Mammary epithelial cell (primary cell): ENCODE measurements at regions of chr3 and their contacts with region 1.

Region 1: GRCh38 chr3:193863657-193864357 is 270.8 kb downstream of the OPA1 start:
- DNase-seq: no peak
- H3K4me3 ChIP-seq: no peak overlapping the region
- H3K27ac ChIP-seq: no peak overlapping the region
- H3K4me1 ChIP-seq: peaks cover 39% of the 10 kb centered on the region
- H3K27me3 ChIP-seq: no peaks in the 10 kb centered on the region
- CTCF ChIP-seq: no peak

Region 2: DNA sequence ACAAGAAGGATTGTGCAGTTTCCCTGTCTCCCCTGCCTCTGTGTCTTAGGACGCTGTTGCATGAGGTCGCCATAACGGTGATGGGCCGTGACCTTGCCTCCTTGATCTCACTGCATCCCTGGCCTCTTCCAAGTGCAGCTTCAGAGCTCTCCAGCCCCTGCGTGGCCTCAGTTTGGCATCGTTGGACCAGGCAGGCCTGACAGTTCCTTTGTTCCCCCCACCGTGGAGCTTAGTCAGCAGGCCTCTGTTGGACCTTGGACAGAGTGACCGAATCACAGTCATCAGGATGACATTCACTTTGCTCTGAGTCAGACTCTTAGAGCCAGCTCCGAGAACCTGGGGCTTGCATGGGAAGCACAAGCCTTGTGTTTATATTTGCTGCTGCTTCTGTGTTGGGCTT is 131.4 kb before region 1 on chr3:
- CTCF ChIA-PET with region 1: no interaction called
- dilution Hi-C with region 1: no loop called
- in situ Hi-C with region 1: no loop called
- intact Hi-C with region 1: no loop called
- DNase-seq: peak; percentile 48
- H3K4me3 ChIP-seq: no peak overlapping the region
- H3K27ac ChIP-seq: no peak overlapping the region
- H3K4me1 ChIP-seq: no peaks in the 10 kb centered on the region
- H3K27me3 ChIP-seq: no peaks in the 10 kb centered on the region
- CTCF ChIP-seq: no peak

Region 3: DNA sequence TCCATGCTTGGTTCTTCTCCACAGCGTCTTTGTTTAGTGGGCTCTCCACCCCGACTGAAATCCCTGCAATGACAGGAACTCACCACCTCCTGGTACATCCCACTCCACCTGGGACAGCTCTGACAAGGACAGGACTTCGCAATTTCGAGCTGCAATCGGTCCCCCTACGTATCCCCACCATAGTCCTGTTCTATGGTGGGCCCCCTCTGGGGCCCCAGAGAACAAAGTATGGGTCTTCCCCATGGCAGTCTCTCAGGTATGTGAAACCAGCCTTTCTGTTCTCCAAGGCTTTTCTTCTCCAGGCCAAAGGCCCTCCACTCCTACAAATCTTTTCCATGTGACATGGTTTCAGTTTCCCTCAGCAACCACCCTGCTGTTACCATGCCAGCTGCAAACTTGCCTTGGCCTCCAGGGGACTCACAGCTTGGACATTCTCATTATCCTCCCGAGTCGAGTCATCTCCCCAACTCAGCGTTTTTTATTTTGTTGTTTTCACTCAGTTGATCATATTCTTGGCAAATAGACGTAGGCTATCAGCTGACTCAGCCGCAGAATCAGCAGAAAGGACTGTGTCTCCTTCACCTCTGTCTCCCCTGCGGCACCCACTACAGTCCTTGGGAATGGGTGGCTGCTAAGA is 37.5 kb before region 1 on chr3:
- CTCF ChIA-PET with region 1: no interaction called
- dilution Hi-C with region 1: loop called (anchors 5 kb)
- in situ Hi-C with region 1: no loop called
- intact Hi-C with region 1: no loop called
- DNase-seq: peak; percentile 95
- H3K4me3 ChIP-seq: no peak overlapping the region
- H3K27ac ChIP-seq: peak overlapping the region; percentile 18
- H3K4me1 ChIP-seq: peaks cover 32% of the 10 kb centered on the region
- H3K27me3 ChIP-seq: no peaks in the 10 kb centered on the region
- CTCF ChIP-seq: no peak